K562 (cell line): ENCODE measurements at regions of chr3 and their contacts with region 1.

Region 1: DNA sequence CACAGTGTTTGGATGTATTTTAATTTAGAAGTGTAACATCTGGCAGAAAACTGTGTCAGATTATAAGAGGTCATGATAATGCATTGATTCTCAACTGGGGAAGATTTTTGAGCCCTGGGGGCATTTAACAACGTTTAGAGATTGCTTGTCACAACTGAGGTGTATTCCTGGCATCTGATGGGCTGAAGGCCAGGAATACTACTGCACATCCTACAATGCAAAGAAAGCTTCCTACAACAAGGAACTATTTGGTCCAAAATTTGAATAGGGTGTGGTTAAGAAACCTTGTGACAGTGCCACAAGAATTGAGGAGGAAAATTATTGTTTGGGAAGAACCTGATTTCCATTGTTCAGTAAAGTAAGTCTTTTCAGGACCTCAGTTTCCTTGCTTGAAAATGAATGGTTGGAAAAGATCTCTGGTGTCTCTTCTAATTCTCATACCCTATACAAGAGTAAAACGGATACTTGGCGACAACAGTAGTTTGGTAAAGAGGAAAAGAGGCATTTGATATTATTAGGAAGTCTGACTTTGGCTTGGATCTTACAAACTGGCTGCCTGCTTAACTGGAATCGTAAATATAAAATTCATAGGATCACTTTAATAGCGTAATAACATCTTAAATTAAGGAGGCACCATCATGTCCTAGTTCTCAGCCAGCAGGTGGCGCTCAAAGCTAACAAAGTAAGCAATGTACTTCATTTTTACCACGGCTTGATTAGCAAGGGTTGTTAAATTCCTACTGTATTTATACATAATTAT is 4.3 kb downstream of the DAZL start:
- DNase-seq: peak; percentile 59 to 85 (median 61)
- ATAC-seq: peak; percentile 88
- H3K4me3 ChIP-seq: no peak overlapping the region
- H3K27ac ChIP-seq: no peak overlapping the region
- H3K4me1 ChIP-seq: peaks cover 0 to 6% of the 10 kb centered on the region in 2 experiments; a peak in 1 of 5 replicates
- H3K27me3 ChIP-seq: 0 out of 5 replicates have a peak, but pooled peaks cover 0 to 2% of the 10 kb centered on the region in 2 experiments
- CTCF ChIP-seq: peak; percentile 65 to 93 (median 76)
- EP300 ChIP-seq: no peak
- POLR2A ChIP-seq: no peak
- RAD21 ChIP-seq: peak; percentile 93 to 94

Region 2: DNA sequence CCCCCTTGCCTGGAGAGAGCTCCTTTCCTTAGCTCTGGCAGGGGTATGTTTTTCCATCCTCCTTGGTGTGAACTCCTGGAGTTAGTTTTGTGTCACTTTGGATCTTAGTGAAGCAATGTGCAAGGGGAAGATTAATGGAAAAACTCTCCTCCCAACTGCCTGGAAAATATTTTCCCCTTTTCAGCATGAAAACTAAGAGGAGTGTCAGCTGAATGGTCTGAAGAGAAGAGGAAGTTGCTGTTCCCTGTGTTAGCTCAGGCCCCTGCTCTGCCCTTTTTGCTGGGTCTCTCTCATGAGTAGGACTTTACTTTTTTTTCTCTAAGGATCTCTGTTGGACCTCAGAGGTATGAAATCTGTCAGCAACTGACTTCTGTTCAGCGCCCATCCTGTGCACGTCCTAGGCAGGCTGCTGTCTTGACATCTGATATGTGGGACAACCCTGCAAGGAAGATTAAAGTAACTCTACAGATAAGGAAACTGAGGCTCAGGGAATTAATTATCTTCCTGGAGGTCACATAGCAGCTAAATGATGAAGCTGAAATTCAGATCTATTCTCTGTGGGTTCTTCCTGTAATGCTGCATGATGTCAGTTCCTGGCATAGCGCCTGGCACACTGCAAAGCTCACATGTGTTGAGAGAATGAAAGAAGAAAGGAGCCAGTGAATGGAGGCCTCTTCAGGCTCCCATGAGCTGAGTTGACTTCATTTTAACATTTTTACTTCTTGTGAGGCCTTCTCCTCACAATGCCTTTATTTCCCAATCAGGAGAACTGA is 536.1 kb before region 1 on chr3:
- CTCF ChIA-PET with region 1: no interaction called
- POLR2A ChIA-PET with region 1: no interaction called
- in situ Hi-C with region 1: no loop called
- intact Hi-C with region 1: no loop called
- DNase-seq: no peak
- ATAC-seq: no peak
- H3K4me3 ChIP-seq: no peak overlapping the region
- H3K27ac ChIP-seq: no peak overlapping the region
- H3K4me1 ChIP-seq: no peaks in the 10 kb centered on the region
- H3K27me3 ChIP-seq: peaks cover 0 to 13% of the 10 kb centered on the region in 2 experiments; a peak in 2 of 5 replicates
- CTCF ChIP-seq: no peak
- EP300 ChIP-seq: no peak
- POLR2A ChIP-seq: no peak
- RAD21 ChIP-seq: no peak

Region 3: DNA sequence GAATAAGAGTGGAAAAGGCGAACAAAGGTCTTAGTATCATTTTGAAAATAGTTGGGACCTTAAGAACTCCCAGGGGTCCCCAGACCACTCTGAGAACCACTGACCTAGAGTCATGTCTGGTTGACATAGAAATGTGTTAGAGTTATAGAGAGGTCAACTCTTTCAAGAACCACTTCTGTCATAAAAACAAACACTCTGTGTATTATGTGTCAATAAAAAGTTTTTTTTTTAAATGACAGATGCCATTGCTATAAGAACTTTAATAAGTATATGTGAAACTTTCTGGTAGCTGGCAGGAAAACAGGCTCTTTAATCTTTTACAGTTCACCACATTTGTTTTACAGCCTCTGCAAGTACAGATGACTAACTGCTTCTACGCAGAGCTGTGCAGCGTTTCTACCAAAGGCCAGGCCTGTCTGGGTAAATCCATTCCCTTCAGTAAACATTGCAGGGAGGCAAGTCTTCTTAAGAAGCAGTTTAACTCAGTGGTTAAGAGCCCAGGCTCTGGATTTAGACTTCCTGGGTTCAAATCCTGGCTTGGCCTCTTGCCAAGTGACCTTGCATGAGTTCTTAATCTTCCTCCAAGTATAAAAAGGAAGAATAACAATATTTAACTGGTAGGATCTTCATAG is 144.1 kb before region 1 on chr3:
- CTCF ChIA-PET with region 1: no interaction called
- POLR2A ChIA-PET with region 1: no interaction called
- in situ Hi-C with region 1: no loop called
- intact Hi-C with region 1: no loop called
- DNase-seq: no peak
- ATAC-seq: no peak
- H3K4me3 ChIP-seq: no peak overlapping the region
- H3K27ac ChIP-seq: no peak overlapping the region
- H3K4me1 ChIP-seq: no peaks in the 10 kb centered on the region
- H3K27me3 ChIP-seq: peaks cover 8 to 15% of the 10 kb centered on the region in 2 experiments; a peak in 3 of 5 replicates
- CTCF ChIP-seq: no peak
- EP300 ChIP-seq: no peak
- POLR2A ChIP-seq: no peak
- RAD21 ChIP-seq: no peak

Region 4: DNA sequence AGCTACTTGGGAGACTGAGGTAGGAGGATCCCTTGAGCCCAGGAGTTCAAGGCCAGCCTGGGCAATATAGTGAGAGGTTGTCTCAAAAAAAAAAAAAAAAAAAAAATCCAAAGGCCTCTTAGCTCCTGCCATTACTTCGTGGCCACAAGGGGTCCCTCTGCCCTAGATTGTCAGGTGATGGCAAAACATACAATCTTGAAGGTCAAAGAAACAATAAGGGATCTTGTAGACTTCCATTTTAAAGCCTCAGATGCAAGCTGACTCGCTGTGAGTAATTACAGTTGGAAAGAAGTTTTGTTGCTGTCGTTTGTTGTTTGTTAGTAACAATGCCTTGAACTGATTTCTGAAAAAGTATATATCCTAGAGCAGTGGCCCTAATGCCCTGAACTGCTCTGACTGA is 227.9 kb after region 1 on chr3:
- CTCF ChIA-PET with region 1: no interaction called
- POLR2A ChIA-PET with region 1: no interaction called
- in situ Hi-C with region 1: no loop called
- intact Hi-C with region 1: loop called (anchors 5 kb)
- DNase-seq: peak; percentile 18 to 41 (median 27)
- ATAC-seq: peak; percentile 82
- H3K4me3 ChIP-seq: no peak overlapping the region
- H3K27ac ChIP-seq: no peak overlapping the region
- H3K4me1 ChIP-seq: no peaks in the 10 kb centered on the region
- H3K27me3 ChIP-seq: no peaks in the 10 kb centered on the region
- CTCF ChIP-seq: peak; percentile 51 to 67 (median 58)
- EP300 ChIP-seq: no peak
- POLR2A ChIP-seq: no peak
- RAD21 ChIP-seq: peak in 1 of 2 experiments; percentile 50; a peak in 3 of 4 replicates

Region 5: DNA sequence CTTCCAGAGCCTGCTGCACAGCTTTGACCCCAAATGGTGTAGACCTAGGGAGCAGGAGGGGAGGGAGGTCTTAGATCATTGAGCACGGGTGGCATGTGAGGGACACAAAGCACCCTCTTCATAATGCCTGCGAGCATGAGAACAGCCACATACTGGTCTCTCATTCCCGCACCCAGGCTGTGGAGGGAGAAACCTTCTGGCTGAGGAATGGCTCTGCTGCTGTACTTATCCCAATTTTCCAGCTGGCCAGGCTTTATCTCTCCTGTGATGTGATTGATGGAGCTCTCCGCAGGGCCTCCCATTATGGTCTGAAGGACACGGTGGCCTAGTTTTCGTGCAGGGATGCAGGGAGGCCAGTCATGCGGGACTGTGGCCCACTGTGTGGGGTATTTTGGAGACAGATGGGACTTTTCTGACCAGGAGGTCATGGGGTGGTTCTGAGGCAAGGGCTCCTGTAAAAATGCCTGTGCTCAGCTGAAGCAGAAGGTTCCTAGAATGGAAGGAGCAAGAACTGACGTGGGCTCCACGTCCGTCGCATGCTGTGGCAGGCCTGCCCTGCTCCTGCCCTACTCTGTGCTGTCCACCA is 535.3 kb after region 1 on chr3:
- CTCF ChIA-PET with region 1: no interaction called
- POLR2A ChIA-PET with region 1: interaction called, 3 read pairs
- in situ Hi-C with region 1: no loop called
- intact Hi-C with region 1: loop called (anchors 2 kb)
- DNase-seq: no peak
- ATAC-seq: no peak
- H3K4me3 ChIP-seq: no peak overlapping the region
- H3K27ac ChIP-seq: no peak overlapping the region
- H3K4me1 ChIP-seq: no peaks in the 10 kb centered on the region
- H3K27me3 ChIP-seq: peaks cover 24 to 80% of the 10 kb centered on the region in 2 experiments
- CTCF ChIP-seq: no peak
- EP300 ChIP-seq: no peak
- POLR2A ChIP-seq: no peak
- RAD21 ChIP-seq: no peak

Region 6: DNA sequence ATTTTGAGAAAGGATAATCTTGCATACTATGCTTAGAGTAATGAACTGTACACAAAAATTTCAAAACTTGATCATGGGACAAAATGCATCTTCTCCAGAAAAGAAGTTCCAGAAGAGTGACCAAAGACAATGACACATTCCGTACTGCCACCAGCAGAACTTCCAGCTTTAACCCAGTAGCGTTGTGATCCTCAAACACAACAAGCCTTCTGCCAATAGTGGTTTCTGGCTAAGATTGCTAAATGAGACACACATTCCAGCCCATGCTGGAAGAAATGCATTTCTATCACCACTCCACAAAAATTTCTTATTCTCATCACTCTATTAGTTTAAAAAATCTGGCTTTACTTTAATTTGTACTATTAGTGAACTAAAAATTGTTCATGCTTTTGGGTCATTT is 806.6 kb after region 1 on chr3:
- CTCF ChIA-PET with region 1: interaction called, 12 read pairs
- POLR2A ChIA-PET with region 1: no interaction called
- in situ Hi-C with region 1: loop called (anchors 10 kb)
- intact Hi-C with region 1: loop called (anchors 1 kb)
- DNase-seq: no peak
- ATAC-seq: no peak
- H3K4me3 ChIP-seq: no peak overlapping the region
- H3K27ac ChIP-seq: no peak overlapping the region
- H3K4me1 ChIP-seq: no peaks in the 10 kb centered on the region
- H3K27me3 ChIP-seq: no peaks in the 10 kb centered on the region
- CTCF ChIP-seq: no peak
- EP300 ChIP-seq: no peak
- POLR2A ChIP-seq: no peak
- RAD21 ChIP-seq: no peak

Region 7: GRCh38 chr3:17841190-17841828 is 1240.3 kb after region 1 on chr3:
- CTCF ChIA-PET with region 1: no interaction called
- POLR2A ChIA-PET with region 1: no interaction called
- in situ Hi-C with region 1: no loop called
- intact Hi-C with region 1: loop called (anchors 5 kb)
- DNase-seq: peak; percentile 81 to 87 (median 84)
- ATAC-seq: peak; percentile 99
- H3K4me3 ChIP-seq: no peak overlapping the region
- H3K27ac ChIP-seq: no peak overlapping the region
- H3K4me1 ChIP-seq: no peaks in the 10 kb centered on the region
- H3K27me3 ChIP-seq: peaks cover 0 to 5% of the 10 kb centered on the region in 2 experiments; a peak in 3 of 5 replicates
- CTCF ChIP-seq: peak; percentile 98 to 99 (median 99)
- EP300 ChIP-seq: peak; percentile 19; the same call in 1 of the 2 replicates
- POLR2A ChIP-seq: no peak
- RAD21 ChIP-seq: peak; percentile 99